ENCODE measurements at regions of chr1 and their contacts with region 1.

Region 1: GRCh38 chr1:100869996-100870395 is 24.6 kb downstream of the EXTL2 start:
- DNase-seq: no peak
- H3K4me3 ChIP-seq: no peak overlapping the region
- CTCF ChIP-seq: no peak

Region 2: GRCh38 chr1:100459358-100460114 is 410.5 kb before region 1 on chr1:
- in situ Hi-C with region 1: loop called (anchors 5 kb)
- DNase-seq: peak; percentile 74
- H3K4me3 ChIP-seq: no peak overlapping the region
- CTCF ChIP-seq: peak; percentile 92

Region 3: DNA sequence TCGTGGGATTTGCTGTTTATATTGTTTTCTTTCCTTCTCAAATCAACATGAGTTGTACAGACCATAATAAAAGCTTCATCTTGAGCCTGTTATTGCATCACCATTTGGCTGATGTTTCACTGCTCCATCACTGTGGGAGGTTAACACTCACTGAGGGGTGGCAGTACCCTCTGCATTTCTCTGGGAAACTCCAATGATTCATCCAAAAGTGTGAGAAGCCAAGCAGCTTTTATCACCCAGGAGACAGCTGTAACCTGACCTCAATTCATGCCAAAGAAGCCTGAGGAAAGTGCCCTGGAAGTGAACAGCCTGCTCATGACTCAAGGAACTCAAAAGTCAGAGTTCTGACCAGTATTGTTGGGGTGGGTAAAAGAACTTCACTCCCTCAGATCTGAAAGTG is 248.0 kb before region 1 on chr1:
- in situ Hi-C with region 1: no loop called
- DNase-seq: peak; percentile 91
- H3K4me3 ChIP-seq: no peak overlapping the region
- CTCF ChIP-seq: no peak

Region 4: GRCh38 chr1:100950781-100951180 is 80.8 kb after region 1 on chr1:
- in situ Hi-C with region 1: no loop called
- DNase-seq: peak; percentile 28
- H3K4me3 ChIP-seq: no peak overlapping the region
- CTCF ChIP-seq: no peak

Measured in astrocyte of the cerebellum (primary cell).